GM13976 (cell line): ENCODE measurements at regions of chr9 and their contacts with region 1.

Region 1: GRCh38 chr9:6305954-6306563 is 22.1 kb upstream of the TPD52L3 start:
- DNase-seq: no peak
- CTCF ChIP-seq: peak; percentile 36

Region 2: GRCh38 chr9:5886114-5886939 is 419.7 kb before region 1 on chr9:
- in situ Hi-C with region 1: loop called (anchors 25 kb)
- DNase-seq: peak; percentile 84
- CTCF ChIP-seq: peak; percentile 86

Region 3: GRCh38 chr9:6068983-6069382 is 237.1 kb before region 1 on chr9:
- in situ Hi-C with region 1: loop called (anchors 10 kb)
- DNase-seq: peak; percentile 67
- CTCF ChIP-seq: no peak

Region 4: DNA sequence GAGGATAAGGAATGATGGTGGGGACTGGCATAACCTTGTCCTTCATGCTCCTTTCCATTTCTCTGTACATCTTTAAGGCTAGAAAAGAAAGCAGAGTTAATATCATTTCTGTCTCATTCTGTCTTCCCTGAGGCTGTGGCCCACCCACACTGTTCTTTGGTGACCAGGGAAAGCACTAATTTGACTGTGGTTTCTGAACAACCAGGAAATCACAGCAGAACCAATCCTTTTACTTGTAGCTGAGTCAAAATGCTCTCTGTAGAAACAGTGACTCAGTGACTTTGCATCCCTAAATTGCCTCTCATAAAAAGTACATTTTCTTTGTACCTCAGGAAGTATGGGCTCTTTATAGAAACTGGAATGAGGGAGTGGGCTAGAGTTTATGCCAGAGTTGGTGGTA is 62.3 kb before region 1 on chr9:
- in situ Hi-C with region 1: no loop called
- DNase-seq: peak; percentile 49
- CTCF ChIP-seq: no peak

Region 5: GRCh38 chr9:6566409-6567139 is 260.5 kb after region 1 on chr9:
- in situ Hi-C with region 1: no loop called
- DNase-seq: no peak
- CTCF ChIP-seq: no peak